Activated CD4-positive, alpha-beta T cell treated with anti-CD3 and anti-CD28 coated beads for 36 hours (primary cell): ENCODE measurements at regions of chr5 and their contacts with region 1.

Region 1: DNA sequence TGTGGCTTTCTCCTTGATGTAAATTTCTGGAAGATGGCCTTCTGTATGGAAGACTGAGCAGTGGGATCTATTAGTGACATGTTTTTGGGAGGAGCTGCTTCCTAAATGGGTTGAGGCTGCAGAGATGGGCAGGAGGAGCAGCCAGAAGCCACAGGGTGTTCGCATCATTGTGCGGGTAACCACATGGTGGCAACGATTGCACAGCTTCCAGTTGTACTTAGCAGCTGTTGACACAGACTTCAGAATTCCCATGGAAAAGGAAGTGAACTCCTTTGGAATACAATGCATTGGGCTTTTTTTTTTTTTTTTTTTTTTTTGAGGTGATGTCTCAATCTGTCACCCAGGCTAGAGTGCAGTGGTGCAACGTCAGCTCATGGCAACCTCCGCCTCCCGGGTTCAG is 297.3 kb downstream of the NR3C1 start:
- DNase-seq: no peak
- ATAC-seq: no peak
- H3K4me3 Mint-ChIP-seq: no peak overlapping the region
- H3K27ac Mint-ChIP-seq: no peak overlapping the region
- H3K4me1 Mint-ChIP-seq: peaks cover 18% of the 10 kb centered on the region
- H3K27me3 Mint-ChIP-seq: no peaks in the 10 kb centered on the region

Region 2: GRCh38 chr5:142215915-142216681 is 890.1 kb before region 1 on chr5:
- CTCF ChIA-PET with region 1: no interaction called
- POLR2A ChIA-PET with region 1: no interaction called
- intact Hi-C with region 1: no loop called
- DNase-seq: no peak
- ATAC-seq: no peak
- H3K4me3 Mint-ChIP-seq: no peak overlapping the region
- H3K27ac Mint-ChIP-seq: no peak overlapping the region
- H3K4me1 Mint-ChIP-seq: peaks cover 7% of the 10 kb centered on the region
- H3K27me3 Mint-ChIP-seq: no peaks in the 10 kb centered on the region

Region 3: GRCh38 chr5:143464723-143465490 is 358.7 kb after region 1 on chr5:
- CTCF ChIA-PET with region 1: no interaction called
- POLR2A ChIA-PET with region 1: no interaction called
- intact Hi-C with region 1: no loop called
- DNase-seq: no peak
- ATAC-seq: no peak
- H3K4me3 Mint-ChIP-seq: no peak overlapping the region
- H3K27ac Mint-ChIP-seq: no peak overlapping the region
- H3K4me1 Mint-ChIP-seq: no peaks in the 10 kb centered on the region
- H3K27me3 Mint-ChIP-seq: no peaks in the 10 kb centered on the region

Region 4: GRCh38 chr5:143592648-143593047 is 486.5 kb after region 1 on chr5:
- CTCF ChIA-PET with region 1: no interaction called
- POLR2A ChIA-PET with region 1: no interaction called
- intact Hi-C with region 1: loop called in 1 of 2 experiments (anchors 10 kb)
- DNase-seq: peak; percentile 44
- ATAC-seq: peak; percentile 51
- H3K4me3 Mint-ChIP-seq: no peak overlapping the region
- H3K27ac Mint-ChIP-seq: no peak overlapping the region
- H3K4me1 Mint-ChIP-seq: peaks cover 40% of the 10 kb centered on the region
- H3K27me3 Mint-ChIP-seq: no peaks in the 10 kb centered on the region